ENCODE measurements at regions of chr19 and their contacts with region 1.

Region 1: GRCh38 chr19:35833972-35834371 is 18.3 kb downstream of the NPHS1 start:
- DNase-seq: no peak
- H3K4me3 ChIP-seq: no peak overlapping the region
- H3K27ac ChIP-seq: no peak overlapping the region
- H3K4me1 ChIP-seq: no peaks in the 10 kb centered on the region
- H3K27me3 ChIP-seq: no peaks in the 10 kb centered on the region
- CTCF ChIP-seq: no peak

Region 2: DNA sequence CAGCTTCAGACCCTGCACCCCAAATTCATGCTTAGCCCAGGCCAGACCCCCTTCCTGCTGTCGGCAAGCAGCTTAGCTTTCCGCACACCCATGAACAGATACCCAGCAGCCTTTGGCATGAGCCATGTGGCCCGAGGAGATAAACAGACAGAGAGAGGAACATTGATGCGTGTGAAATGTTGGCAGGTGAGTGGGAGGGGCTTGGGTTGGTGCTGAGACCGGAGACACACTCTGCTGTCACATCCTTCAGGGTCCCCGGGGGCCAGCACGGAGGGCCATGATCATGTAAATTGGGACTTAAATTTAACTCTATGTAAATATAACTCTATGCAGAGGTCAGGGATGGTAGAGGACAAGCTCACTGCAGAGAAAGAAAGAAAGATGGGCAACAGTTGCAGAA is 503.5 kb before region 1 on chr19:
- CTCF ChIA-PET with region 1: no interaction called
- dilution Hi-C with region 1: loop called (anchors 10 kb)
- in situ Hi-C with region 1: no loop called
- intact Hi-C with region 1: no loop called
- DNase-seq: no peak
- H3K4me3 ChIP-seq: no peak overlapping the region
- H3K27ac ChIP-seq: no peak overlapping the region
- H3K4me1 ChIP-seq: peaks cover 5% of the 10 kb centered on the region
- H3K27me3 ChIP-seq: no peaks in the 10 kb centered on the region
- CTCF ChIP-seq: no peak

Region 3: GRCh38 chr19:35484252-35485036 is 349.5 kb before region 1 on chr19:
- CTCF ChIA-PET with region 1: no interaction called
- dilution Hi-C with region 1: loop called (anchors 10 kb)
- in situ Hi-C with region 1: no loop called
- intact Hi-C with region 1: no loop called
- DNase-seq: no peak
- H3K4me3 ChIP-seq: no peak overlapping the region
- H3K27ac ChIP-seq: no peak overlapping the region
- H3K4me1 ChIP-seq: no peaks in the 10 kb centered on the region
- H3K27me3 ChIP-seq: no peaks in the 10 kb centered on the region
- CTCF ChIP-seq: no peak

Region 4: GRCh38 chr19:35571406-35571967 is 262.5 kb before region 1 on chr19:
- CTCF ChIA-PET with region 1: no interaction called
- dilution Hi-C with region 1: loop called (anchors 10 kb)
- in situ Hi-C with region 1: no loop called
- intact Hi-C with region 1: no loop called
- DNase-seq: no peak
- H3K4me3 ChIP-seq: no peak overlapping the region
- H3K27ac ChIP-seq: no peak overlapping the region
- H3K4me1 ChIP-seq: no peaks in the 10 kb centered on the region
- H3K27me3 ChIP-seq: no peaks in the 10 kb centered on the region
- CTCF ChIP-seq: no peak

Region 5: DNA sequence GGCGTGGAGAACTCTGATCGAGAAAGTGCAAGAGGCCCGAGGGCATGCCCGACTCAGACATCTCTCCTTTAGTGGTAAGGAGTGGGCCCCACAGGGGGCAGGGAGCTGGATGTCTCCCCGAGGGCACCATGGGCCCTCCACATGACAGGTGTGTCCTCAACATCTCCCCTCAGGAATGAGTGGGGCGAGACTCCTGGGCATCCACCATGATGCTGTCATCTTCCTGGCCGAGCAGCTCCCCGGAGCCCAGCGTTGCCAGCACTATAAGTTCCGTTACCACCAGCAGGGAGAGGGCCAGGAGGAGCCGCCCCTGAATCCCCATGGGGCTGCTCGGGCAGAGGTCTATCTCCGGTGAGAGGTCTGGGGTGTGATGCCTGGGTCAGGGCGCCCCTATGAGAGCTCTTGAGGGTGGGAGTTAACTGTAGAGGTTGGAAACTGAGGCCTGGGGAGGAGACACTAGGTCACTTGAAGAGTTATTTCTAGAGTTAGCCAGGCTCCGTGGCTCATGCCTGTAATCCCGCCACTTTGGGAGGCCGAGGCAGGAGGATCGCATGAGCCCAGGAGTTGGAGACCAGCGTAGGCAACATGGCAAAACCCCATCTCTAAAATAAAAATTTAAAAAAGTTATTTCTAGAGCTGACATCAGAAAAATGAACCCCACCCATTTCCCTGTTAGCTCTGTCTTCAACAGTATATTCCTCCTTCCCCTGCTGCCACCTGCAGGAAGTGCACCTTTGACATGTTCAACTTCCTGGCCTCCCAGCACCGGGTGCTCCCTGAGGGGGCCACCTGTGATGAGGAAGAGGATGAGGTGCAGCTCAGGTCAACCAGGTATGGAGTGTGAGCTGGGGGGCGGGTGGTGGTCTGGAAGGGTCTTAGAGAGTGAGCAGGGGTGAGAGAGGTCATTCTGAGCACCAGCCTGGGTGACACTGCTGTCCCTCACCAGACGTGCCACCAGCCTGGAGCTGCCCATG is 96.8 kb before region 1 on chr19:
- CTCF ChIA-PET with region 1: no interaction called
- dilution Hi-C with region 1: loop called (anchors 10 kb)
- in situ Hi-C with region 1: no loop called
- intact Hi-C with region 1: no loop called
- DNase-seq: no peak
- H3K4me3 ChIP-seq: no peak overlapping the region
- H3K27ac ChIP-seq: no peak overlapping the region
- H3K4me1 ChIP-seq: peaks cover 9% of the 10 kb centered on the region
- H3K27me3 ChIP-seq: no peaks in the 10 kb centered on the region
- CTCF ChIP-seq: peak in 1 of 2 donors; percentile 12

Region 6: GRCh38 chr19:35767288-35768081 is 66.5 kb before region 1 on chr19:
- CTCF ChIA-PET with region 1: no interaction called
- dilution Hi-C with region 1: loop called (anchors 10 kb)
- in situ Hi-C with region 1: no loop called
- intact Hi-C with region 1: no loop called
- DNase-seq: no peak
- H3K4me3 ChIP-seq: no peak overlapping the region
- H3K27ac ChIP-seq: no peak overlapping the region
- H3K4me1 ChIP-seq: no peaks in the 10 kb centered on the region
- H3K27me3 ChIP-seq: no peaks in the 10 kb centered on the region
- CTCF ChIP-seq: no peak

Measured in mammary epithelial cell (primary cell).